Activated CD4-positive, alpha-beta memory T cell treated with anti-CD3 and anti-CD28 coated beads for 36 hours (primary cell): ENCODE measurements at regions of chr17 and their contacts with region 1.

Region 1: DNA sequence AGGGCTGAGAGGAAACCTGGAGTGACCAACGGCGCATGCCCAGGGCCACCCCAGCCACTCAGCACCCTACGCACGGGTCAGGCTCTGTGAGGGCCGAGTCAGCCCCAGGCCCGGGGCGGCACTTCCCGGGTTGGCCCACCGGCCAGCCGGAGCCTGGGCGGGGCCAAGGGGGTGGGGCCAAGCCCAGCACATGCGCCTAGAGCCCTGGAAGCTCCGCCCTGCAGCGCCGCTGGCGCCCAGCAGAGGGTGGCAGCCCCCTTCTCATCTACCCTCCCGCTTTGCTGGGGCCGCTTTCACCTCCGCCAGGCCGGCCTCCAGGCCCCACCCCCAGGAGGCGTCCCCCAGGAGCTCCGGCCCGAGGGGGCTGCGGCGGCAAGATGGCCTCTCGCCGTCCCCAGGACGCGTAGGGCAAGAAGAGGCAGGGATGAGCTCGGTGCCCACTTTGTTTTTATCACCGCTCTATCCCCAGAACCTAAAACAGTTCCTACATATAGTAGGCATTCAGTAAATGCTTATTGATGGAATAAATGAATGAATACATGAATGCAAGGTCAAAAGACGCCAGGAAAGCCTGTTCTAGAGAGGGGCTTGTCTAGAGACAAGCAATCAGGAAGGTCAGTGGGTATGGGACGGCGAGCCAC is 31.3 kb downstream of the MYO18A start:
- DNase-seq: peak; percentile 96
- H3K4me3 Mint-ChIP-seq: peak overlapping the region; percentile 70
- H3K27ac Mint-ChIP-seq: peak overlapping the region; percentile 75
- H3K4me1 Mint-ChIP-seq: peaks cover 46% of the 10 kb centered on the region
- H3K27me3 Mint-ChIP-seq: no peaks in the 10 kb centered on the region

Region 2: DNA sequence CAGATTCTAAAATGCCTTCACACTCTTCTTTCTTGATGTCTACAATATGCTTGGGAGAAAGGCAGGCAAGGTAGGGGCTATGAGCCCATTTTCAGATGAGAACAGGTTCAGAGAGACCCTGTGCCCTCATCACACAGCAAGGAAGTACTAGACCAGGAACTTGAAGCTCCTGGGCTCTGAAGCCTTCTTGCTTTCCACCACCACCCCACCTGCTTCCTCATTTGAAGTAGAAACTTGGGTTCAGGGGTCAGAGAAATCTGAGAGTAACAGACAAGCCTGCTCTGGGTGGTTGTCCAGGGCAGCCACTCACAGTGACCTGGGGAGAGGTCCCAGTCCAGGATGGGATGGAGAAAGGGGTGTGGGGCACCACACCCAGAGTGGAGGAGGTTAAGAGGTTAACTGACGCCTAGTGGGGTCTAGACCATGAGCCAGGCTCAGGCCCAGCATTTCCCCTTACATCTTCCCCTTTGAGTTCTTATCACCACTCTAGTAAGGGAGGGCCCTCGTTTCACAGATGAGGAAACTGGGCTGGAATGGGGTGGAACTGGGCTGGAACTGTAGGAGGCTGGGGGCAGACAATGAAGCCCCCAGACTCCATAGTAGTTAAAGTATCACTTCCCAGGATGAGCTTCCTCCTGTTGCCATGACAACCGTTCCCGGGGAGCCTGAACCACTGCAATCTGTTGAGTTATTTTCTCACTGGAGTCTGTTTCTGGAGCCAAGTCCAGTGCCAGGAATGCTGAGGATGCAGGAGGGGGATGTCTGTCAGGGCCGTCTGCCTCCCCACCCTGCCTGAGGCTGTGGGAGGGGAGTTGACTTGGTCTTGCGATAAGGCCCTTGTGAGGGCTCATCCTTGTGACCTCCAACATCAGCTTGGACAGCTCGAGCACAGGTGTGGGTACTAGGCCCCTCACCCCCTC is 181.4 kb before region 1 on chr17:
- CTCF ChIA-PET with region 1: interaction called, 10 read pairs
- POLR2A ChIA-PET with region 1: no interaction called
- intact Hi-C with region 1: no loop called
- DNase-seq: no peak
- H3K4me3 Mint-ChIP-seq: no peak overlapping the region
- H3K27ac Mint-ChIP-seq: no peak overlapping the region
- H3K4me1 Mint-ChIP-seq: no peaks in the 10 kb centered on the region
- H3K27me3 Mint-ChIP-seq: peaks cover 13% of the 10 kb centered on the region

Region 3: DNA sequence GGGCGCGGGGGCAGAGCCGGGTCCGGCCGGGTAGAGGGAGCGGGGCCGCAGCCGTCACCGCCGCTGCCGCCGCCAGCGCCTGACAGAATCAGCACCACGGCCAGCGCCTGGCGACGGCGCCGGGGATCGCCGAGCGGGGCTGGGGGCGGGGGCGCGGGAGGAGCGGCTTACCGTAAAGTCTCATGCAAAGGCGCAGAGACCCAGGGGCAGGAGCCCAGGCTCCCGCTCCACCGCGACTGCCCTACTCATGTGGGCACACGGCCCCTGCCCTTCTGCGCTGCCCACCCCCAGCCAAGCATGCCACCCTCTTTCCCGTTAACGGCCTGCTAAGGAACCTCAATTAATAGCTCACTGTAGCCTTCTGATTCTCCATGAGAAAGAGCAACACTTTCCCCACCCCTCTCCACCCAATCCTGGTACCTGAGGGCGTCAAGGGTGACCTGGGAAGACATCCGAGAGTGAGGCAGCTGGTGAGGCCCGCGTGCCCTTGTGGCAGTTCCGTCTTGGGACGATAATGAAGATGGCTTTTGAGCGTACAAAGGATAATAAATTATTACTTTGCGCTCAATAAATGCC is 142.9 kb before region 1 on chr17 and contains the start of gene SEZ6:
- CTCF ChIA-PET with region 1: no interaction called
- POLR2A ChIA-PET with region 1: no interaction called
- intact Hi-C with region 1: no loop called
- DNase-seq: peak; percentile 80
- H3K4me3 Mint-ChIP-seq: no peak within 1 kb of the TSS
- H3K27ac Mint-ChIP-seq: no peak within 1 kb of the TSS
- H3K4me1 Mint-ChIP-seq: peaks cover 3% of the 10 kb centered on the region
- H3K27me3 Mint-ChIP-seq: peaks cover 52% of the 10 kb centered on the region
- total RNA-seq, gene SEZ6: not detected

Region 4: GRCh38 chr17:29124117-29124924 is 24.6 kb before region 1 on chr17:
- CTCF ChIA-PET with region 1: interaction called, 394 read pairs
- POLR2A ChIA-PET with region 1: interaction called, 3 read pairs
- intact Hi-C with region 1: loop called (anchors 1 kb)
- DNase-seq: peak; percentile 60
- H3K4me3 Mint-ChIP-seq: no peak overlapping the region
- H3K27ac Mint-ChIP-seq: no peak overlapping the region
- H3K4me1 Mint-ChIP-seq: no peaks in the 10 kb centered on the region
- H3K27me3 Mint-ChIP-seq: no peaks in the 10 kb centered on the region

Region 5: DNA sequence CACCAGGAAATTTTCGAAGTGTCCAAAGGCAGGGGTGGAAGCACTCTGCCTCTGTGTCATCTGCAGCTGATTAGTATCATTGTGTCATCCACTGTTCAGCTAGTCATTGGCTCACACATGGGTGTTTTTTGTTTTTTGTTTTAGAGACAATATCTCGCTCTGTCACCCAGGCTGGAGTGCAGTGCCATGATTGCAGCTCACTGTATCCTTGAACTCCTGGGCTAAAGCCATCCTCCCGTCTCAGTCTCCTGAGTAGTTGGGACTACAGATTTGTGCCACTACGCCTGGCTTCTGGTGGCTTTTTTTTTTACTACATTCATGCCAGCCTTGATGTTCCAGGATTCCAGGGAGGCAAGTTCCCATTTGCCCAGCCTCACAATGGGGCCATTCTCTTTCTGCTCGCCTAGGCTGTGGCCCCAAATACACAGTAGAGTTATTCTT is 63.8 kb after region 1 on chr17:
- CTCF ChIA-PET with region 1: interaction called, 247 read pairs
- POLR2A ChIA-PET with region 1: interaction called, 4 read pairs
- intact Hi-C with region 1: no loop called
- DNase-seq: no peak
- H3K4me3 Mint-ChIP-seq: no peak overlapping the region
- H3K27ac Mint-ChIP-seq: no peak overlapping the region
- H3K4me1 Mint-ChIP-seq: no peaks in the 10 kb centered on the region
- H3K27me3 Mint-ChIP-seq: no peaks in the 10 kb centered on the region

Region 6: GRCh38 chr17:29256735-29257466 is 108.0 kb after region 1 on chr17:
- CTCF ChIA-PET with region 1: interaction called, 13 read pairs
- POLR2A ChIA-PET with region 1: no interaction called
- intact Hi-C with region 1: no loop called
- DNase-seq: no peak
- H3K4me3 Mint-ChIP-seq: no peak overlapping the region
- H3K27ac Mint-ChIP-seq: peak overlapping the region; percentile 70
- H3K4me1 Mint-ChIP-seq: peaks cover 43% of the 10 kb centered on the region
- H3K27me3 Mint-ChIP-seq: no peaks in the 10 kb centered on the region

Region 7: DNA sequence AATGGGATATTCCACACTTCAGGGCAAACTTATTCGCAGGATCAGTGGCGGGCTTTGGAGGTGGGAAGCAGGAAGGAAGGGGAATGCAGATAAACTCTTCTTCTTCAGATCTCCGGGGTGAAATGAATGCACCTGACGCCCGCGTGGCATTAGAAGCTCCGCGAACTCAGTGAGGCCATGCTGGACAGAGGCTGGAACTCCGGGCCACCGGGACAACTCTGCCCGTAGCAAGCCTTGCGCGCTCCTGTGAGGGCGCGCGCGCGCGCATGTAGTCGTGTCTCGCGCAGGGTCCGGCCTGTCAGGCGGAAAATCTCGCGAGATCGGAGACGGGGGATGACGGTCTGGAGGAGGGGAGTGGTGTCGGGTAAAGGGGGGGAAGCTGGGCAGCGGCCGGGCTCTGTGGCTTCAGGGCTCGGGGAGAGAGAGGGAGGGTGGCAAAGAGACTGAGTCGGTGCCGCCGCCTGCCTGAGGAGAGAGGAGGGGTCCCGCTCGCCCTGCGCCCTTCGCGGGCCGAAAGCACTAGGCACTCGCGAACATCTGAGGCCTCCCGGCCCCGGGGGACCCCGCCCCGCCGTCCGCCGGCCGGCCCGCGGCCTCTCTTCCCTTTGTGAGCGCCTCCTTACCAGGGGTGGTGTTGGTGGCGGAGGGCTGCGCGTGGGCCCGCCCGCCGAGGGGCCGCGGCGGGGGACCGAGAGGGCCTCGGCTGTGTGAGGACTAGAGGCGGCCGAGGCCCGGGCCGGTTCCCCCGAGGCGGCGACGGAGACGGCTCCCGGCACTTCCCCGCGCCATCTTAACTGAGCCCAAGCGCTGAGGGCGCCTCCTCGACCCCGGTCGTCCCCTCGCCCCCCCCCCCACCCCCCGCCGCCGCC is 241.3 kb after region 1 on chr17 and contains the start of gene TAOK1:
- CTCF ChIA-PET with region 1: no interaction called
- POLR2A ChIA-PET with region 1: no interaction called
- intact Hi-C with region 1: loop called (anchors 10 kb)
- DNase-seq: peak; percentile 98
- H3K4me3 Mint-ChIP-seq: peak within 1 kb of the TSS; percentile 95
- H3K27ac Mint-ChIP-seq: peak within 1 kb of the TSS; percentile 85
- H3K4me1 Mint-ChIP-seq: peaks cover 36% of the 10 kb centered on the region
- H3K27me3 Mint-ChIP-seq: no peaks in the 10 kb centered on the region
- total RNA-seq, gene TAOK1: 29.8 to 34.3 TPM